ENCODE measurements at regions of chr12 and their contacts with region 1.

Region 1: GRCh38 chr12:91326058-91327027 is 143.7 kb upstream of the DCN start:
- DNase-seq: peak in 1 of 2 donors; percentile 66
- ATAC-seq: peak in 2 of 3 donors; percentile 50 to 52
- H3K4me3 ChIP-seq: no peak overlapping the region
- H3K4me3 Mint-ChIP-seq: no peak overlapping the region
- H3K27ac ChIP-seq: no peak overlapping the region
- H3K27ac Mint-ChIP-seq: no peak overlapping the region
- H3K4me1 ChIP-seq: no peaks in the 10 kb centered on the region
- H3K4me1 Mint-ChIP-seq: no peaks in the 10 kb centered on the region
- H3K27me3 ChIP-seq: no peaks in the 10 kb centered on the region
- H3K27me3 Mint-ChIP-seq: peaks cover 0 to 3% of the 10 kb centered on the region in 2 donors
- CTCF ChIP-seq: peak; percentile 87

Region 2: DNA sequence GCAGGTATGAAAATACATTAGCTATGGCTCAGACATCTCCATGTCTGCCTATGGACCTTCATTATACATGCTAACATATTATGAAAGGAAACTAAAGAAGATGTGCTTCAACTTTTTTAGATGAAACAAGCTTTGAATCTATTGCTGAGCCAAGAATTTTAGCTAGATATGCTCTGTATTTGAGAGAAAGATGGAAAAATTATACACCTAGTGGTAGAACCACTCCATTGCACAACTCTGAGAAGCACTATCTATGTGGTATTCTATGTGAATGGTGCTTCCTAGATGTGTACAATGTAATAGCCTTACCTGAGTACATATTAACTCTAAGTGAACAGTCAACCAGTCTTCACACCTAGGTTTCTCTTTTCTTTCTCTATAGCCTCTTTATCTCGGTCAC is 338.8 kb before region 1 on chr12:
- intact Hi-C with region 1: loop called (anchors 10 kb)
- DNase-seq: no peak
- ATAC-seq: no peak
- H3K4me3 ChIP-seq: no peak overlapping the region
- H3K4me3 Mint-ChIP-seq: no peak overlapping the region
- H3K27ac ChIP-seq: no peak overlapping the region
- H3K27ac Mint-ChIP-seq: no peak overlapping the region
- H3K4me1 ChIP-seq: no peaks in the 10 kb centered on the region
- H3K4me1 Mint-ChIP-seq: no peaks in the 10 kb centered on the region
- H3K27me3 ChIP-seq: no peaks in the 10 kb centered on the region
- H3K27me3 Mint-ChIP-seq: no peaks in the 10 kb centered on the region
- CTCF ChIP-seq: no peak

Measured in natural killer cell (primary cell).